Activated naive CD4-positive, alpha-beta T cell treated with anti-CD3 and anti-CD28 coated beads for 36 hours (primary cell): ENCODE measurements at regions of chr2 and their contacts with region 1.

Region 1: GRCh38 chr2:197279997-197280746 is 30.4 kb downstream of the ANKRD44 start:
- DNase-seq: peak; percentile 42
- H3K4me3 Mint-ChIP-seq: peak overlapping the region; percentile 59
- H3K27ac Mint-ChIP-seq: peak overlapping the region; percentile 86
- H3K4me1 Mint-ChIP-seq: peaks cover 79% of the 10 kb centered on the region
- H3K27me3 Mint-ChIP-seq: no peaks in the 10 kb centered on the region

Region 2: GRCh38 chr2:197268786-197269584 is 11.2 kb before region 1 on chr2:
- CTCF ChIA-PET with region 1: interaction called, 8 read pairs
- intact Hi-C with region 1: loop called (anchors 1 kb)
- DNase-seq: peak; percentile 71
- H3K4me3 Mint-ChIP-seq: no peak overlapping the region
- H3K27ac Mint-ChIP-seq: peak overlapping the region; percentile 73
- H3K4me1 Mint-ChIP-seq: peaks cover 93% of the 10 kb centered on the region
- H3K27me3 Mint-ChIP-seq: no peaks in the 10 kb centered on the region

Region 3: GRCh38 chr2:197293252-197294007 is 13.3 kb after region 1 on chr2:
- CTCF ChIA-PET with region 1: interaction called, 3 read pairs
- intact Hi-C with region 1: loop called (anchors 1 kb)
- DNase-seq: peak; percentile 48
- H3K4me3 Mint-ChIP-seq: peak overlapping the region; percentile 57
- H3K27ac Mint-ChIP-seq: peak overlapping the region; percentile 92
- H3K4me1 Mint-ChIP-seq: peaks cover 87% of the 10 kb centered on the region
- H3K27me3 Mint-ChIP-seq: no peaks in the 10 kb centered on the region